Activated CD8-positive, alpha-beta T cell treated with anti-CD3 and anti-CD28 coated beads for 36 hours (primary cell): ENCODE measurements at regions of chr9 and their contacts with region 1.

Region 1: GRCh38 chr9:122350638-122351355 is 20.0 kb upstream of the PTGS1 start:
- DNase-seq: peak; percentile 82
- ATAC-seq: peak; percentile 89
- H3K4me3 Mint-ChIP-seq: no peak overlapping the region
- H3K27ac Mint-ChIP-seq: no peak overlapping the region
- H3K4me1 Mint-ChIP-seq: peaks cover 15% of the 10 kb centered on the region
- H3K27me3 Mint-ChIP-seq: peaks cover 13% of the 10 kb centered on the region
- CTCF ChIP-seq: peak; percentile 92

Region 2: GRCh38 chr9:122092611-122093506 is 257.9 kb before region 1 on chr9 and contains the start of gene TTLL11:
- CTCF ChIA-PET with region 1: interaction called, 70 read pairs
- POLR2A ChIA-PET with region 1: no interaction called
- intact Hi-C with region 1: loop called (anchors 2 kb)
- DNase-seq: peak; percentile 98
- ATAC-seq: peak; percentile 95
- H3K4me3 Mint-ChIP-seq: peak within 1 kb of the TSS; percentile 82
- H3K27ac Mint-ChIP-seq: peak within 1 kb of the TSS; percentile 53
- H3K4me1 Mint-ChIP-seq: peaks cover 25% of the 10 kb centered on the region
- H3K27me3 Mint-ChIP-seq: peaks cover 8% of the 10 kb centered on the region
- CTCF ChIP-seq: no peak
- total RNA-seq, gene TTLL11: 0.56 to 1.4 TPM

Region 3: GRCh38 chr9:122107291-122107805 is 243.4 kb before region 1 on chr9:
- CTCF ChIA-PET with region 1: interaction called, 14 read pairs
- POLR2A ChIA-PET with region 1: no interaction called
- intact Hi-C with region 1: no loop called
- DNase-seq: no peak
- ATAC-seq: no peak
- H3K4me3 Mint-ChIP-seq: no peak overlapping the region
- H3K27ac Mint-ChIP-seq: no peak overlapping the region
- H3K4me1 Mint-ChIP-seq: no peaks in the 10 kb centered on the region
- H3K27me3 Mint-ChIP-seq: no peaks in the 10 kb centered on the region
- CTCF ChIP-seq: no peak

Region 4: DNA sequence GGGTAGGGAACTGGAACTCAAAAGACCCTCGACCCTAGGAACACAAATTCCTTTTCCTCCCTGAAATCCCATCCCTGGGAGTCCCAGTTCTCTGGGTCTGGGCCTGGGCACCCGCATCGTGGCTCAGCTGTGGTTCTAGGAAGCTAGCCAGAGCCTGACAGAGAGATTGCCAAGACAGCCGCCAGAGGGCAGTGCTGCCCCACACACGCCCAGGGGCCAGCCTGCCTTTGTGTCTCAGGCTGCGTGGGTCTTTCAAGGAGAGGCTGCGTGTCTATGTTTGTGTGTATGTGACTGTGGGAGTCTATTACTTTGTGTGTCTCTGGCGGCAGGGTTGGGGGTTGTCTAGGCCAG is 225.7 kb before region 1 on chr9:
- CTCF ChIA-PET with region 1: interaction called, 315 read pairs
- POLR2A ChIA-PET with region 1: no interaction called
- intact Hi-C with region 1: loop called (anchors 1 kb)
- DNase-seq: peak; percentile 84
- ATAC-seq: peak; percentile 80
- H3K4me3 Mint-ChIP-seq: no peak overlapping the region
- H3K27ac Mint-ChIP-seq: no peak overlapping the region
- H3K4me1 Mint-ChIP-seq: peaks cover 16% of the 10 kb centered on the region
- H3K27me3 Mint-ChIP-seq: peaks cover 39% of the 10 kb centered on the region
- CTCF ChIP-seq: peak; percentile 92

Region 5: GRCh38 chr9:122264360-122265148 is 86.2 kb before region 1 on chr9 and contains the starts of genes MRRF and RBM18:
- CTCF ChIA-PET with region 1: interaction called, 10 read pairs
- POLR2A ChIA-PET with region 1: interaction called, 3 read pairs
- intact Hi-C with region 1: loop called (anchors 10 kb)
- DNase-seq: peak; percentile 92
- ATAC-seq: peak; percentile 81
- H3K4me3 Mint-ChIP-seq: peak within 1 kb of the TSS; percentile 84
- H3K27ac Mint-ChIP-seq: peak within 1 kb of the TSS; percentile 100
- H3K4me1 Mint-ChIP-seq: peaks cover 41% of the 10 kb centered on the region
- H3K27me3 Mint-ChIP-seq: no peaks in the 10 kb centered on the region
- CTCF ChIP-seq: no peak
- total RNA-seq, gene MRRF: 69.8 to 76.0 TPM
- total RNA-seq, gene RBM18: 24.3 to 28.6 TPM

Region 6: DNA sequence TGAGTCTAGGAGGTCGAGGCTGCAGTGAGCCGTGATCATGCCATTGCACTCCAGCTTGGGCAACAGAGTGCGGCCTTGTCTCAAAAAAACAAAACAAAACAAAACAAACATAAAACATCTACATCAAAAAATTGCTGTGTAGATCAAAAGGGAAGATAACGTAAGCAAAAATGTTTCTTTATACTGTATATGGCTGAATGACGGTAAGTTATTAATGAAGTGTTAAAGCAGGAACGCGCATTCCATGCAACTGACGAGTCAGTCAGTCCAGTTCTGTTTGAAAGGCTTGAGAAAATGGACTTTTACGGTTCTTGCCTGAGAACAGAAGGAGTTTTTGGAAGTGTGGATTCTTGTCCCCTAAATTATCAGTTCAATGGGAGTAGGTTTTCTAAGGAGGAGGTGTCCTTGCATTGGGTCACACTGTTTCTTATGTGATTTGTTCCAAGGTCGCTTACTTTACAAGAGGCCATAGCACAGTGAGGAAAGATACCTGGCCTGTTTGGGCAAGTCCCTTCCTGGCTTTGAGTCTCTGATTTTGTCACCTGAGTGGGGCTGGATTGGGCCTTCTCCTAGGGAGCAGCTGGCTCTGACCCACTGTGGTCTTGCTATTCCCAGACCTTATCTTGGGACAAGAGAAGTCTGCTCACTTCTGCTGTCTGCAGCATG is 13.5 kb after region 1 on chr9:
- CTCF ChIA-PET with region 1: interaction called, 13 read pairs
- POLR2A ChIA-PET with region 1: no interaction called
- intact Hi-C with region 1: no loop called
- DNase-seq: no peak
- ATAC-seq: no peak
- H3K4me3 Mint-ChIP-seq: no peak overlapping the region
- H3K27ac Mint-ChIP-seq: no peak overlapping the region
- H3K4me1 Mint-ChIP-seq: peaks cover 6% of the 10 kb centered on the region
- H3K27me3 Mint-ChIP-seq: peaks cover 4% of the 10 kb centered on the region
- CTCF ChIP-seq: no peak

Region 7: DNA sequence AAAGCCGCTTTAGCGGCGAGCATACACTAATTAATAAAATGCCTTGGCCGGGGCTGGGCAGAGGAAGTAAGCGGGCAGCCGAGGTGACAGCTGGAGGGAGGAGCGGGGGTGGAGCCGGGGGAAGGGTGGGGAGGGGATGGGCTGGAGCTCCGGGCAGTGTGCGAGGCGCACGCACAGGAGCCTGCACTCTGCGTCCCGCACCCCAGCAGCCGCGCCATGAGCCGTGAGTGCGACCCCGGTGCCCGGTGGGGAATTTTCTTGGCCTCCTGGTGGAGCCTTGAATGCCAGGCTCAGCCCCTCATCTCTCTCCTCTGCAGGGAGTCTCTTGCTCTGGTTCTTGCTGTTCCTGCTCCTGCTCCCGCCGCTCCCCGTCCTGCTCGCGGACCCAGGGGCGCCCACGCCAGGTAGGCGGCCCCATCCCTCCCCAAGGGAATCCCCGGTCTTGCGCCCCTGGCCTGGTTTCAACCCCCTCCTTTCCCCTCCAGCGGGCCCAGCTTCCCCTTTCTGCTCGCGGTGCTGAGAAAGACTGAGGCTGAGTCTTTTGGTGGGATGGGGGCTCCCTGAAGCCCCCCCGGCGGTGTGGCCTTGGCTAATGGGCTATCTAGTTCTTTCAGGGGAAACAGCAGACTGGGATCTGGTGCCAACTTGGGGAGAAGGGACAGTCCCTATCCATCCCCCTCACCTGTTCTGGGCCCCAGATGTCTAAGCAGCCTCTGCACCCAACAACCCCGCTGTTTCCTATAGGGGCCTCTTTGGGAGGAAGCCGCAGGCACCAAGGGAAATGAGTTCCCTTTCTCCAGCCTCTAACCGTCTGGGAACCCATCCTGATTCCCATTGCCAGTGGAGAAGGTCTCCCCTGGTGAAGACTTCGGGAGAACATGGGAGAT is 20.3 kb after region 1 on chr9 and contains the start of gene PTGS1:
- CTCF ChIA-PET with region 1: interaction called, 10 read pairs
- POLR2A ChIA-PET with region 1: no interaction called
- intact Hi-C with region 1: no loop called
- DNase-seq: peak; percentile 26
- ATAC-seq: peak; percentile 51
- H3K4me3 Mint-ChIP-seq: peak within 1 kb of the TSS; percentile 26
- H3K27ac Mint-ChIP-seq: no peak within 1 kb of the TSS
- H3K4me1 Mint-ChIP-seq: peaks cover 7% of the 10 kb centered on the region
- H3K27me3 Mint-ChIP-seq: peaks cover 23% of the 10 kb centered on the region
- CTCF ChIP-seq: no peak
- total RNA-seq, gene PTGS1: 0.23 TPM in 1 of 2 experiments, not detected in the other

Region 8: DNA sequence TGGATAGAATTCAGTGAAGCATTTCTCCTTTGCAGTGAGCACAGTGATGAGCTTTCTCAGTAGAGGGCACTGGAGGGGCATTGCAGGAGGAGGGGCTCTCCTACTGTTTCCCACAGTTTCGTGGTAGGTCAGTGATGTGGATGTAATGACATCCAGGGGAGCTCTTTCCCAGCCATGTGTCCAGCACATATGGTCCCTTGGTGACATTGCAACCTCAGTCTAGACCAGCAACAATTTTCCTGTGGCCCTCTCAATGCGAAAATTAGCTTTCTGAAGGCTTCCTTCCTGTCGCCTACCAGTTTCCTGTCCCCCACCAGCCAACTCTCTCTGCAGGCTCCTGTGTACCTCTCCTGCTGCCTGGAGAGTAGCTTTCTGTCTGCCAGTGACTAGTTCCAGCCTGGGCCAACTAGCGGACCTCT is 484.5 kb after region 1 on chr9:
- CTCF ChIA-PET with region 1: no interaction called
- POLR2A ChIA-PET with region 1: no interaction called
- intact Hi-C with region 1: no loop called
- DNase-seq: peak; percentile 45
- ATAC-seq: peak; percentile 79
- H3K4me3 Mint-ChIP-seq: peak overlapping the region; percentile 54
- H3K27ac Mint-ChIP-seq: peak overlapping the region; percentile 89
- H3K4me1 Mint-ChIP-seq: peaks cover 14% of the 10 kb centered on the region
- H3K27me3 Mint-ChIP-seq: no peaks in the 10 kb centered on the region
- CTCF ChIP-seq: peak; percentile 25